ENCODE measurements at regions of chr10 and their contacts with region 1.

Region 1: GRCh38 chr10:110671788-110672579 is 27.8 kb downstream of the RBM20 start:
- DNase-seq: peak; percentile 83
- H3K27ac ChIP-seq: no peak overlapping the region
- CTCF ChIP-seq: peak; percentile 78

Region 2: DNA sequence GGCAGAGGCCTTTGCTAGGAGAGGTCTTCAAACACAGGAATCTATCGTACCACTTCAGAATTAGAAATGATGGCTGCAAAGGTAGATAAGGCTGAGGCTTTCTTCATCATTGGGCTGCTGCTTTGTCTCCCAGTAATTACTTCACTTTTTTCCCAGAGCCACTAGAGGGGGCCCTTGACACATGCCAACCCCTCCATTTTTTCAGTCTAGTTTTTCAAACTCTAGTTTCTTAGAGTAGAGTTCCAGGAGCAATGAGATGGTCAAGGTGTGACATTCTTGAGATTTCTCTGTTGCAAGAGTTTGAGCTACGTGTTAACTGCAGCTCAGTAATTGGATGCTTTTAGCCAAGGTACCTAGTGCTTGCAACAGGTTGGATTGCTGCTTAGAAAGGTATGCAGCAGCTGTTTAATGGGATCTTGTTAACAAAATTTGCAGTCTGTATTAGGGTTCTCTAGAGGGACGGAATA is 61.6 kb before region 1 on chr10:
- CTCF ChIA-PET with region 1: interaction called, 47 read pairs
- POLR2A ChIA-PET with region 1: no interaction called
- DNase-seq: peak; percentile 76
- H3K27ac ChIP-seq: no peak overlapping the region
- CTCF ChIP-seq: peak; percentile 92

Region 3: GRCh38 chr10:110682348-110682747 is 10.4 kb after region 1 on chr10:
- CTCF ChIA-PET with region 1: interaction called, 16 read pairs
- POLR2A ChIA-PET with region 1: no interaction called
- DNase-seq: no peak
- H3K27ac ChIP-seq: no peak overlapping the region
- CTCF ChIP-seq: no peak

Region 4: DNA sequence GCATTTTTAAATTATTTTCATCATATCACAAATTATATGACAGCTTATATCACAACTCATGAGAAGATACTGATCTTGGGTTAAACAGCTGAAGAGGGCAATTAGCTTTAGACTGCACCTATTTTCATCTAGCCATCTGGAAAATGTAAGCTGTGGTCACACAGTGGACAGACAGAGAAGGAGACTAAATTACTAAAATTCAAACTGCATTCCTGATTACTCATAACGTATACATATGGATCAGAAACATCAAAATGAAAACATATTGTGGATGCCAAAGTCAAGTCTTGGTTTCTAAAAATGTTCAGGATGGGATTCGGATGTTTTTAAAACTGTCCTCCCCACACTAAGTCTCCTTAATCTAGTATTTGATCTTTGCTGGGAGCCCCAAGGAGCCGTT is 240.4 kb after region 1 on chr10:
- CTCF ChIA-PET with region 1: no interaction called
- POLR2A ChIA-PET with region 1: no interaction called
- DNase-seq: no peak
- H3K27ac ChIP-seq: no peak overlapping the region
- CTCF ChIP-seq: no peak

Region 5: GRCh38 chr10:112183329-112184051 is 1511.5 kb after region 1 on chr10 and contains the start of gene GPAM:
- CTCF ChIA-PET with region 1: interaction called, 11 read pairs
- POLR2A ChIA-PET with region 1: no interaction called
- DNase-seq: peak; percentile 94
- H3K27ac ChIP-seq: peak within 1 kb of the TSS; percentile 68
- CTCF ChIP-seq: no peak